ENCODE measurements at regions of chr16 and their contacts with region 1.

Region 1: GRCh38 chr16:87484487-87485331 is 8.1 kb downstream of the ZCCHC14 start:
- DNase-seq: no peak
- ATAC-seq: no peak
- H3K4me3 ChIP-seq: no peak overlapping the region
- H3K27ac ChIP-seq: no peak overlapping the region
- H3K4me1 ChIP-seq: peaks cover 19% of the 10 kb centered on the region
- H3K27me3 ChIP-seq: no peaks in the 10 kb centered on the region
- CTCF ChIP-seq: no peak
- POLR2A ChIP-seq: no peak
- RAD21 ChIP-seq: no peak

Region 2: GRCh38 chr16:87391950-87392822 is 92.5 kb before region 1 on chr16 and contains the start of gene MAP1LC3B:
- CTCF ChIA-PET with region 1: no interaction called
- POLR2A ChIA-PET with region 1: no interaction called
- dilution Hi-C with region 1: no loop called
- in situ Hi-C with region 1: no loop called
- intact Hi-C with region 1: no loop called
- DNase-seq: peak; percentile 94
- ATAC-seq: peak; percentile 83
- H3K4me3 ChIP-seq: peak within 1 kb of the TSS; percentile 75
- H3K27ac ChIP-seq: peak within 1 kb of the TSS; percentile 90
- H3K4me1 ChIP-seq: peaks cover 7% of the 10 kb centered on the region
- H3K27me3 ChIP-seq: no peaks in the 10 kb centered on the region
- CTCF ChIP-seq: no peak
- POLR2A ChIP-seq: peak; percentile 99
- RAD21 ChIP-seq: no peak
- total RNA-seq, gene MAP1LC3B: 23.5 and 25.3 TPM in 2 replicates

Region 3: GRCh38 chr16:87525352-87525751 is 40.6 kb after region 1 on chr16:
- CTCF ChIA-PET with region 1: no interaction called
- POLR2A ChIA-PET with region 1: interaction called, 10 read pairs
- dilution Hi-C with region 1: no loop called
- in situ Hi-C with region 1: no loop called
- intact Hi-C with region 1: no loop called
- DNase-seq: no peak
- ATAC-seq: no peak
- H3K4me3 ChIP-seq: no peak overlapping the region
- H3K27ac ChIP-seq: no peak overlapping the region
- H3K4me1 ChIP-seq: no peaks in the 10 kb centered on the region
- H3K27me3 ChIP-seq: peaks cover 28% of the 10 kb centered on the region
- CTCF ChIP-seq: no peak
- POLR2A ChIP-seq: no peak
- RAD21 ChIP-seq: no peak

Region 4: GRCh38 chr16:87790278-87791032 is 305.7 kb after region 1 on chr16:
- CTCF ChIA-PET with region 1: no interaction called
- POLR2A ChIA-PET with region 1: no interaction called
- dilution Hi-C with region 1: no loop called
- in situ Hi-C with region 1: no loop called
- intact Hi-C with region 1: no loop called
- DNase-seq: peak; percentile 33
- ATAC-seq: peak; percentile 57
- H3K4me3 ChIP-seq: no peak overlapping the region
- H3K27ac ChIP-seq: peak overlapping the region; percentile 14; the same call in 1 of the 2 replicates
- H3K4me1 ChIP-seq: peaks cover 25% of the 10 kb centered on the region
- H3K27me3 ChIP-seq: no peaks in the 10 kb centered on the region
- CTCF ChIP-seq: no peak
- POLR2A ChIP-seq: no peak
- RAD21 ChIP-seq: no peak